Left ventricle myocardium inferior (tissue), 1 donor: ENCODE measurements at regions of chr18 and their contacts with region 1.

Region 1: GRCh38 chr18:23623040-23623439 is 36.7 kb upstream of the NPC1 start:
- DNase-seq: no peak
- H3K4me3 ChIP-seq: no peak overlapping the region
- H3K27ac ChIP-seq: no peak overlapping the region
- H3K4me1 ChIP-seq: peaks cover 12% of the 10 kb centered on the region
- H3K27me3 ChIP-seq: peaks cover 8% of the 10 kb centered on the region
- CTCF ChIP-seq: no peak

Region 2: DNA sequence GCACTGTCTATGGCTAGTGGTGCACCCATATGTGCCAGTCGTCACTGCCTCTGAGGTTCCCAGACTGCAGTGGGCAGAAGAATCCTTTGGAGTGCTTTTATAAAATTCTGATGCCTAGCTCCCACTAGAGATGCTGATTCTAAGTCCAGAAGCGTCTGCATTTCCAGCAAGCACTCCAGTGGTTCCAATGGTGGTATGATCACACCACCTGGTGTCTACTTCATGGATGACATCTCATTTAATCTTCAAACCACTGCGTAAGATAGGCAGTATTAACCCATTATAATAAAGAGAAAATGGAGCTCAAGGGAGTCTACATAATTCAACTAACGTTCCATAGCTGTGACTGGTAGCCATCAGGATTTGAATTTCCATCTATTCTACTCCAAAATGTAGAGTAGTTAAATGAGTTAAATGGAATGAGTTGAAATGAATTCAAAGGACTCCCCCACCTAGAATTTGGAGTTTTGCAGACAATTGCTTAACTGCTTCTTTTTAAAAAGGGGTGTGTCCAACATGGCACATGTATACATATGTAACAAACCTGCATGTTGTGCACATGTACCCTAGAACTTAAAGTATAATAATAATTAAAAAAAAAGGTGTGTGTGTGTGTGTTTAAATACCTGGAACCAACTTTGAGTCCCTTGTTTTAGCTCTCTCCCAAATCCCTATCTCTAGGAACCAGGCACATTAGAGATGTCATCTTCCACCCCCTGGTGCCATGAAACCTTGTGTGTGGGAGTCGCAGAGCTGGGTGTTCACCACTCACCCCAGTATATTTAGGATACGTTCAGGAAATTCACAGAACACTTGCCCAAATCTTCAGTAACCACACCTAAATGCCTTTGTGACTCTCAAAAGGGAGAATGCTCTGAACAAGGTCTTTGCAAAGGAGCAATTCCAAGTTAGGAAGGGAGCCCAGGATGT is 80.3 kb after region 1 on chr18:
- intact Hi-C with region 1: loop called (anchors 5 kb)
- DNase-seq: no peak
- H3K4me3 ChIP-seq: no peak overlapping the region
- H3K27ac ChIP-seq: peak overlapping the region; percentile 43
- H3K4me1 ChIP-seq: no peaks in the 10 kb centered on the region
- H3K27me3 ChIP-seq: no peaks in the 10 kb centered on the region
- CTCF ChIP-seq: peak; percentile 70

Region 3: DNA sequence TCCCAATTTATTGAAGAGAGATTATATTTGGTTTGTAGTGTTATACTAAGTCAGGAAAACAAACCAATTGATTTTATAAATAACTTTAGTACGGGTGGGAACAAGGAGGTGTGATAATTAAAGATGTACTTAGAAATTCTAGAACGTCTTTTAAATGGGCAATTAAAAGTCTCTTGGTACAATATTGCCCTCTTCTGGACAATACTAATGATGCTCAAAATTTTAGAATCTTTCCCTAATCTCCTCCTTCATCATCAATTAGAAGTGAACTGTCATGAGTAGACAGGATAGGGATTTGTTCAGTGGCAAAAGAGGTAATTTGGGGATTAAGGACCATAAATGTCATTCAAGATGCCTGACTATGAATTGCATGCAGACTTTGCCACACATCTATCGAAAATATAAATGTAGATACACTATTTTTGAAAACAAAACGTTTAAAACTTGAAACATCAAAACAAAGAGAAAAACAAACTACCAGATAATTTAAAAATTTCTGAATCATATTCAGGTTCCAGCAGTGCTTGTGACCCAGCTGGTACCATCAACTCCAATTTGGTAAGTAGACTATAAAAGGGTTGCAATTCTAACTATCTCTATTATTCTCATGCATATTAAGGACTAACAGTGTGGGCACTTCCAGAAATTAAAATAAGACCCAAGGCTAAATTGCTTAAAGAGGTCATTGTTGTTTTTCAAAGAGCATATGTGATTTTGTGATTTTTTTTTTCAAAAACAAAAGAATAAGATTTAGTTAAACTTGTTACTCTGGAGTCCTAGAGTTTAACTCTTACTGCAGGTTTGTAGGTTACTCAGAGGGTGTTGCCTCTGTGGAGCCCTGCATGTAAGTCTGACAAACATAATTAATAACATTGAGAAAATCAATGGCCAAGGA is 189.8 kb after region 1 on chr18:
- intact Hi-C with region 1: loop called (anchors 5 kb)
- DNase-seq: no peak
- H3K4me3 ChIP-seq: no peak overlapping the region
- H3K27ac ChIP-seq: no peak overlapping the region
- H3K4me1 ChIP-seq: peaks cover 12% of the 10 kb centered on the region
- H3K27me3 ChIP-seq: no peaks in the 10 kb centered on the region
- CTCF ChIP-seq: peak; percentile 73